Activated T-helper 2 cell treated with anti-CD3 and anti-CD28 coated beads, Interferon-gamma antibody, Interleukin-2, Interleukin-4, amounts not matched to agents 10 μg/mL and 5 μg/mL and 100 μg/mL, durations not matched to agents 14 hours and 24 hours and 36 hours (primary cell): ENCODE measurements at regions of chrX and their contacts with region 1.

Region 1: GRCh38 chrX:71283403-71284143 is at the start of gene NONO:
- DNase-seq: peak; percentile 84
- H3K4me3 Mint-ChIP-seq: peak within 1 kb of the TSS; percentile 88
- H3K27ac Mint-ChIP-seq: peak within 1 kb of the TSS; percentile 100
- H3K4me1 Mint-ChIP-seq: peaks cover 12% of the 10 kb centered on the region
- H3K27me3 Mint-ChIP-seq: peaks cover 3% of the 10 kb centered on the region
- total RNA-seq, gene NONO: 585 and 612 TPM in 2 replicates

Region 2: DNA sequence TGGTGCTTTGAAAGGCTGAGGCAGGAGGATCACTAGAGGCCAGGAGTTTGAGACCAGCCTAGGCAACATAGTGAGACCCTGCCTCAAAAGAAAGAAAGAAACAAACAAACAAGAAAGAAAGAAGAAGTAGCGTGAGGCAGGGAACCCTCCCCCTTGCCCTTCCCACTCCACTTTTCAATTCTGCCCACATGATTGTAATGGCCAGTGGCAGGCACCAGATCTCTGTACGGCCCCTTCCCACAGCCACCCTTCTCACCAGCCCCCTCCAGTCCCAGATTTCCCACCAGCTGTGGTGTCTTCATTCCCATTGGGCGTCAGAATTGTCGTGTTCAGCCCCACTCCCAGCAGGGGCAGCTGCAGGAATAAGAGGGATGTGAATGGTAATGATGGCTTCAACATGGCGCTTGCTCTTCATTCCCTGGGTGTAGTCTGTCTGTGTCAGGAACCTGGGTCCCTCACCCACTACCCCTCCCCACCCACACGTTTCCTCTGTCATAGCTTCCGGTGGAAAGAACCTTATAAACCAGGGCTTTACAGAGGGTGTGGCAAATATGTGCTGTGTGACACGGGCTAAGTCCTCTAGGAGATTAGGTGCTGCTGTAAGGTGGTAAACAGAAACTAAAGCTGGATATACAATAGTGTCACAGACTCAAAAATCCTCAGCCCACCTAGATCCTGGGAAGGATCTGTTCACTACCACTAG is 172.3 kb before region 1 on chrX and contains the start of gene IL2RG:
- intact Hi-C with region 1: loop called (anchors 5 kb)
- DNase-seq: peak; percentile 74
- H3K4me3 Mint-ChIP-seq: peak within 1 kb of the TSS; percentile 100
- H3K27ac Mint-ChIP-seq: peak within 1 kb of the TSS; percentile 95
- H3K4me1 Mint-ChIP-seq: peaks cover 39% of the 10 kb centered on the region
- H3K27me3 Mint-ChIP-seq: no peaks in the 10 kb centered on the region
- total RNA-seq, gene IL2RG: 358 and 366 TPM in 2 replicates

Region 3: DNA sequence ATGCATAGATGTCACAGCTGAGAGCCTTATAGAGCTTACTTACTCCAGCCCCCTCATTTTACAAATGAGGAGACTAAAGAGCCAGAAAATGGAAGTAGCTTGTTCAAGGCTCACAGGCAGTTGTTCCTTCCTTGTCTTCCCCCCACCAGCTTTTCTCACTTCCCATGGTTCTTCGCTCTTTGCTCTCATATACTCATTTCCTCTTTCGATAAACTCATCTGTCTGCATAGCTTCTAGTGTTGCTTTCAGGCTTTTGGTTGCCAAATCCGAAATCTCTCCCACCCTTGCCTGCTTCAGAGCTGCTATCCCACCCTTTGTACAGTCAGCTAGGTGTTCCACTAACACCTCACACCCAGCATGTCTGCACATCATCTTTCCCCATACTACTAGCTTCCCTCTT is 85.5 kb before region 1 on chrX:
- intact Hi-C with region 1: loop called (anchors 5 kb)
- DNase-seq: no peak
- H3K4me3 Mint-ChIP-seq: peak overlapping the region; percentile 86
- H3K27ac Mint-ChIP-seq: peak overlapping the region; percentile 88
- H3K4me1 Mint-ChIP-seq: peaks cover 15% of the 10 kb centered on the region
- H3K27me3 Mint-ChIP-seq: no peaks in the 10 kb centered on the region

Region 4: DNA sequence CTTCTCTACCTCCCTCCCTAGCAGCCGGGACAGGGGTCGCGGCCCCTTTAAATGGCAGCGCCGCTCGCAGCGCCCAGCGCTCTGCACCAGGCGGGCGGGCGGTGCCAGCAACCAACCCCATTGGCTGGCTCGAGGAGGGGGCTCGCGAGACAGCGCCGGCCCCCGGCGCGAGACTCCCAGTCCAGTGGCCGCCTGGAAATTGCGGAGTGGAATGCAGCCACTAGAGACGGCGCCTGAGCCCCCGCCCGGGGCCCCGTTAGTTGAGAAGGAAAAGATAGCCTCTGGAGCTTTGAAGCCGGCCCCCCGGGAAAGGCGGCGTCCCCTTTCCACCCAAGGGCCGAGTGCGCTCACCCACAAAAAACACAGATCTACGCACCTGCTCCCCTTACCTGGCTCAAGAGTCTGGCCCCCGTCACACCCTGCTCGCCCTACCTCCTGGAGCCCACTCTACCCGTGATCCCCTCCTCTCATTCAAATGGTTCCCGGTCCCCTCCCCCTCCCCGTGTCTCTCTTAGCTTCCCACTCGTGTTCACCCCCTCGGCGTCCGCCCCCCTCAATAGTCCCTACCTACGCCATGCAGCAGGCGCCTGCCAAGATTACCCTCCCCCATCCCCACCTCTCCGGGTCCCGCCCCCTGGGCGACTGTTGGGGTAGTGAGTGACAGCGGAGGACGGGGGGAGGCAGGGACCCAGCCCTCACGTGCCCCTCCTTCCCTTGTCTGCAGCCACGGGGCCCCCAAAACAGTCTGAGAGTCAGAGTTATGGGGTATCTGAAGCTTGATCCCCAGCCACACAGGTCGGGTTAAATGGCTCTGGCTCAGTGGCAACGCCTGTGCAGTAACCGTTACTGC is 29.3 kb before region 1 on chrX and contains the start of gene ZMYM3:
- intact Hi-C with region 1: loop called (anchors 1 kb)
- DNase-seq: peak; percentile 72
- H3K4me3 Mint-ChIP-seq: peak within 1 kb of the TSS; percentile 88
- H3K27ac Mint-ChIP-seq: peak within 1 kb of the TSS; percentile 93
- H3K4me1 Mint-ChIP-seq: peaks cover 27% of the 10 kb centered on the region
- H3K27me3 Mint-ChIP-seq: no peaks in the 10 kb centered on the region
- total RNA-seq, gene ZMYM3: 26.8 and 31.4 TPM in 2 replicates

Region 5: GRCh38 chrX:71365876-71366673 is 82.5 kb after region 1 on chrX and contains the start of gene TAF1:
- intact Hi-C with region 1: loop called (anchors 1 kb)
- DNase-seq: peak; percentile 88
- H3K4me3 Mint-ChIP-seq: peak within 1 kb of the TSS; percentile 98
- H3K27ac Mint-ChIP-seq: peak within 1 kb of the TSS; percentile 99
- H3K4me1 Mint-ChIP-seq: peaks cover 20% of the 10 kb centered on the region
- H3K27me3 Mint-ChIP-seq: no peaks in the 10 kb centered on the region
- total RNA-seq, gene TAF1: 48.0 and 49.6 TPM in 2 replicates